ENCODE measurements at regions of chr6 and their contacts with region 1.

Region 1: DNA sequence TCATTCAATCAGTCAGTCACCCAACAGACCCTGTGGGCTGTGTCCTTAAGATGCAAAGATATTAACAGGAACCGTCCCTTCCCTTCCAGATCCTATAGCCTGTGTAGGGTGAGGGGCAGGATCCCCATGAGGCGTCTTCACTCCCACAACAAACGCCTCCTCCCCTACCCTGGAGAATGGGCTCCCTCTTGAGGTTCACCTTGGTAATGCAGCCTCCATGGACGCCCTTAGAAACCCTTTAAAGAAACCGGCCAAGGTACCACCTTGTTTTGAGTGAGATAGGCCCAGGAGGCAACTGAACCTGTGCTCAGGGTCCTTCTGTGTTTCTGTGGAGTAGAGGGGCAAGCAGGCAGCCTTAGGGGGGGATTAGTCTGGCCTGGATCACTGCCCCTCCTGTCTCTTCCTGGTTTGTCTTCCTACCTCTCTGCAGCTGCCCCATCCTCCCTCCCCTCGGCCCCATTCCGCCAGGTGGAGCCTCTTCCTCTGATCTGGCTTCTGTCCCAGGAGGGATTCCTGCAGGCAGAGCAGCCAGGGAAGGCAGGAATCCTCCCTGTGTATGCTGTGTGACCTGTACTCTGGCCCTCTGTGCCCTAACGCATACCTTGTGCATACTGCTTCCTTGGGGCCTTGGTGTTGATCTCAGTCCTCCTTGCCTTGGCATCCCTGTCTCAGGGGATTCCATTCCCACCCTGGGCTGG is 6.6 kb upstream of the GUCA1A start:
- DNase-seq: no peak
- H3K4me3 ChIP-seq: no peak overlapping the region
- CTCF ChIP-seq: peak; percentile 91

Region 2: DNA sequence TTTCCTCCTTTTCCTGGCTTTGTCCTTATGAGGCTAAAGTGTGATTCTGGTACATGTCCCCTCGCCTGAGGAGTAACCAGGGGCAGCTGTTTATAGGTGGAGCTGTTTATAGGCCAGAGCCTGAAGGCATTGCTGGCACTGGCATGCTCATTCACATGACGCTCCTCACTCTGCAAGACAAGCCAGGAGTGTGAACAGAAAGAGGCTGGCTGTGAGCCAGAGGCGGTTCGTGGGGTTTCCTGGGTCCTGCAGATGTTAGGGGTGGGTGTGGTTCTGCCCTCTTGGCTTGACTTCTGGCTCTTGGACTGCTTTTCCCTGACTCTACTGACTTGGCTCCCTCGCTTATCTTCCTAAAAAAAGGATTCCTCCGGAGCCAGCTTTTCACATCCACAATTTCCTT is 541.2 kb before region 1 on chr6:
- CTCF ChIA-PET with region 1: no interaction called
- POLR2A ChIA-PET with region 1: no interaction called
- DNase-seq: no peak
- H3K4me3 ChIP-seq: no peak overlapping the region
- CTCF ChIP-seq: no peak

Region 3: DNA sequence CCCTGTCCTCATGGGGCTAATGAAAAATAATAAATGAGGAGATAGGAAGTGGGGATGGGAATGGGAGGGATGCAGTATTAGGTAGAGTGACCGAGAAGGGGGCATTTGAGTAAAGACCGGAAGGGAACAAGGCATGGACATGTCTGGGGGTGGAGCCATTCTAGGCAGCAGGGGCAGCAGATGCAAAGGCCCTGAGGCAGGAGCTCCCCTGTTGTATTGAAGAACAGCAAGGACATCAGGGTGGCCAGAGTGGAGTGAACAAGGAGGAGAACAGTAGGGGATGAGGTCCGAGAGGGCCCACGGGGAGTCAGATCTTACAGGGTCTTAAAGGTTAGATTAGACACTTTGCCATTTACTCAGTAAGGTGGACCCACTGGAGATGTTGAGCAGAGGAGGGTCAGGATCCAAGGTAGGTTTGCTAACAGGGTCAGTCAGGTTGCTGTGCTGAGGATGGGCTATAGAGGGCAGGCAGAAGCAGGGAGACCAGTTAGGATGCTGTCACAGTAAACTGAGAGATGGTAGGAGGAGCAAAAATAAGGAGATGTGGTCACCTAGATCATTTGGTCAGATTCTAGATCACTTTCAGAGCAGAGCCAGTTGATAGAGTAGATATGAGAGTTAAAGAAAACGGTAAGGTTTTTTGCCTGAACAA is 97.6 kb before region 1 on chr6:
- CTCF ChIA-PET with region 1: interaction called, 276 read pairs
- POLR2A ChIA-PET with region 1: no interaction called
- DNase-seq: no peak
- H3K4me3 ChIP-seq: no peak overlapping the region
- CTCF ChIP-seq: no peak

Region 4: DNA sequence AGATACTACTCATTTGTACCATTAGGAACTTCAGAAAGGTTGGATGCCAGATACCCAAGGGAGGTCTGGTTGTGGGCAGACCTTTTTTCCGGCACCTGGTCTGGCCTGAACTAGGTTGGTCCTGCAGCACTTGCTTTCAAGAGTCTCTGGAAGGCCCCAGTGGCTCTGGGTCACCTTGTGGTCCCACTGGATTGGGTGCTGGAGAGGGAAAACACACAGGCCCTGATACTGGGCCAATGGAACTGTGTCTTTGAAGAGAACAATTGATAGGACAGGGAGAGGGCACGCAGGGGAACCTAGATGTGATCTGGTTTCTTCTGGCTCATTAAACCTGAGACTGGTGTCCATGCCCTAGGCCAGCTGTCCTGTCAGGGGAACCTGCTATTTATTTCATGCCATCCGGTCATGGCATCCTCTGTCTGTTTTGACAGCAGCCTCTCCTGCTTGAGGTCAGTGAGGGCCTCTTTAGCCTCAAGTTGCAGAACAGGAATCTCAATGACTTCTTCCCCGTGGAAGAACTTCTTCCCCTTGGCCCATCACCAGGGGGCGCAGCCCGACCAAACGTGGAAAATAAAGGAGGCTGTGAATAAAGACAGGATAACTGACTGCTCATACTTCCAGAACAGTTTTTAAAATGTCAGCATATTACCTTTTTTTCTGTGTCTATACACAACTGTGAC is 91.3 kb before region 1 on chr6:
- CTCF ChIA-PET with region 1: interaction called, 276 read pairs
- POLR2A ChIA-PET with region 1: no interaction called
- DNase-seq: no peak
- H3K4me3 ChIP-seq: no peak overlapping the region
- CTCF ChIP-seq: peak; percentile 79

Region 5: DNA sequence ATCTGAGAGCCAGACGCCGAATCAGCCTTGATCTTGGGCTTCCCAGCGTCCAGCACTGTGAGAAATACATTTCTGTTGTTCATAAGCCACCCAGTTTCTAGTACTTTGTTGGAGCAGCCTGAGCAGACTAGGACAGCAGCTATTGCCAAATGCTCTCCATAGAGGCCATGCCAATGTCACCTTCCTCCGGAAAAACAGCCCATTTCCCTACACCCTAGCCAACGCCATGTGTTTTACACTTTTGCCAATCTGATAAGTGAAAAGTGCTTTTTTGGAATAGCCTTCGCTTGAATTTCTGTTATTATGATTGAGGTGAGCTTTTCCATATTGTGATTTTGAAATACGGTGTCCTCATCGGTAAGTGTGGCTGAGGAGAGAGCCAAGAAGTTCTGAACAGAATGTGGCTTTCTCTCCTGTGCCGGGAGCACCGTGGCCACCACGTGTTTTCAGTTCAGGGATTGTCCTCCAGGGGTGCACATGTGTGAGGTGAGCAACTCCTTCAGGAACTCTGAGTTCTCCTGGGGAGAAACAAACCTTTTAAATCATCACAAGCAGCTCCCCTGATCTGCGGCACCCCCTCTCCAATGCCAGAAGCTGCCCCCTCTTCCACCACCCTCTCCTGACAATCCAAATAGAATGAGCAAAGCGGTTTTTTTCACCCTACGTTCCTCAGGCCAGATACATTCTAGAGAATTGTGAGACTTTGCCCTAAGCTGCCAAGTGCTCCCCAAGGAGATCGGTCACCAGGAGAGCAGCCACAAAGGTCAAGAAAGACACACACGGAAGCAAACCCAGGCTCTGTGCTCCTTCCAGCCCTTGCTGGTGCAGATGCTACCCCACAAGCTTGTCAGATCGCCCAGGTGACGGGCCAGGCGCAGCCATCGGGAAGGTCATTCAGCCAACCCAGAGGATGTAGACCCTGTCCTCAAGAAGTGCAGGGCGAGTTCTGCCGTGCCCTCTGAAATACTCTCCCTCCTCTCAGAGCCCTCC is 80.3 kb before region 1 on chr6:
- CTCF ChIA-PET with region 1: interaction called, 276 read pairs
- POLR2A ChIA-PET with region 1: no interaction called
- DNase-seq: no peak
- H3K4me3 ChIP-seq: no peak overlapping the region
- CTCF ChIP-seq: peak; percentile 2

Region 6: GRCh38 chr6:42095785-42096541 is 70.6 kb before region 1 on chr6:
- CTCF ChIA-PET with region 1: interaction called, 64 read pairs
- POLR2A ChIA-PET with region 1: no interaction called
- DNase-seq: no peak
- H3K4me3 ChIP-seq: no peak overlapping the region
- CTCF ChIP-seq: no peak

Region 7: DNA sequence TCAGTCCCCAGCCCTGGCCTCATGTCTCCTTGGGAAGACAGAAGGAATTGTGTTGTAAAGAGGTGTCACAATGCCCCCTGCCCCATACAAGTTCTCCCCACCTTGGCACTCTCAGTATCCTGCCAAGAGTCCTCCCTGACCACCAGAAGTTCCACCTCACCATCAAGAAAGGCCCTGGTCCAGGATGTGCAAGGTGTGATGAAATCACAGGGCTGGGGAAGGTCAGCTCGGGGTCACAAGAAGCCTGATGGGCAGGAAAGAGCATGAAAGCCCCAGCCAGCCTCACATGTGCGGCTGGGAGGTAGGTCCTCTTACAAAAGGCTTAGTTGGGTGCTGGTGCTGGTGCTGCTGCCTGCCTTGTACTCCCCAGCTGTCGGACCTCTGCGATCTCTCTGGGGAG is 11.3 kb before region 1 on chr6:
- CTCF ChIA-PET with region 1: interaction called, 16 read pairs
- POLR2A ChIA-PET with region 1: no interaction called
- DNase-seq: no peak
- H3K4me3 ChIP-seq: no peak overlapping the region
- CTCF ChIP-seq: no peak

Region 8: GRCh38 chr6:42831237-42831636 is 664.6 kb after region 1 on chr6:
- CTCF ChIA-PET with region 1: no interaction called
- POLR2A ChIA-PET with region 1: no interaction called
- DNase-seq: no peak
- H3K4me3 ChIP-seq: no peak overlapping the region
- CTCF ChIP-seq: no peak

Measured in AG04449 (cell line).